Heart right ventricle (tissue), 16 donors: ENCODE measurements at regions of chr18 and their contacts with region 1.

Region 1: GRCh38 chr18:62368100-62368499 is 43.0 kb downstream of the TNFRSF11A start:
- DNase-seq: no peak
- ATAC-seq: no peak
- H3K4me3 ChIP-seq: no peak overlapping the region
- H3K27ac ChIP-seq: no peak overlapping the region
- H3K4me1 ChIP-seq: no peaks in the 10 kb centered on the region
- H3K27me3 ChIP-seq: peaks cover 0 to 4% (median 0%) of the 10 kb centered on the region in 7 donors
- CTCF ChIP-seq: no peak

Region 2: GRCh38 chr18:62346333-62347090 is 21.6 kb before region 1 on chr18:
- intact Hi-C with region 1: loop called in 1 of 10 experiments (anchors 1 kb)
- DNase-seq: no peak
- ATAC-seq: no peak
- H3K4me3 ChIP-seq: no peak overlapping the region
- H3K27ac ChIP-seq: no peak overlapping the region
- H3K4me1 ChIP-seq: no peaks in the 10 kb centered on the region
- H3K27me3 ChIP-seq: peaks cover 0 to 15% (median 0%) of the 10 kb centered on the region in 7 donors
- CTCF ChIP-seq: no peak

Region 3: DNA sequence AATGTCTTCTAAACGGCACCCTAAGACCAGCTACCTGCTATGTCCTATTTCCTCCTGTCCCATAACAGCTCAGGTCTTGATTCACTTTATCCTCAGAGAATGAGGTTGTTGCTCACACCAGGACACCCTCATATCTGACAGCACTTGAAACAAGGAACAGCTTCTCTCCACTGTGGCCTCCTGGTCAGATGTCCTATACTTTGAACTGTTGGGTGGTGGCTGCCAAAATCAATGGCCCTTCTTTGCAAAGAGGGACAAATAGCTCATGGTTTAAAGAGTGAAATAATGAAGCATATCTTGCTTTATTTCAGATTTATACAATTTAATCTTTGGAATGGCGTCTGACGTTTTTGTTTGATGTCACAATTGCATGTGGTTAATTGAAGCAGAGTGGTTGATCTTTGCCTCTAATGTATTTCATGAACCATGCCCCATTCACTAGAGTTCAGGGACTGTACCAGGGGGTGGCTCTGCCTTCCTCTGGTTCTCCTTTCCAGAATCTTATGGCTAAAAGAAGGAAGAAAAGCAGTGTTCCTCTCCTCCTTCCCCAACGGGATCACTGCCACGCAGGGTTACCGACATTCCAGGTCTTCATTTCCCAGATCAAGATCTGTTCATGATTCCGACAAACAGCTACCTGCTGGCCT is 130.6 kb after region 1 on chr18:
- intact Hi-C with region 1: no loop called
- DNase-seq: no peak
- ATAC-seq: peak in 1 of 8 donors; percentile 44
- H3K4me3 ChIP-seq: no peak overlapping the region
- H3K27ac ChIP-seq: peak overlapping the region in 1 of 10 donors; percentile 42
- H3K4me1 ChIP-seq: peaks cover 0 to 15% (median 0%) of the 10 kb centered on the region in 9 donors
- H3K27me3 ChIP-seq: peaks cover 0 to under 1% (median 0%) of the 10 kb centered on the region in 7 donors
- CTCF ChIP-seq: no peak